Brain microvascular endothelial cell (primary cell): ENCODE measurements at regions of chr13 and their contacts with region 1.

Region 1: GRCh38 chr13:28679628-28680027 is 20.7 kb downstream of the POMP start:
- DNase-seq: no peak
- H3K4me3 ChIP-seq: no peak overlapping the region
- H3K27ac ChIP-seq: no peak overlapping the region
- H3K27me3 ChIP-seq: no peaks in the 10 kb centered on the region
- CTCF ChIP-seq: peak; percentile 22

Region 2: DNA sequence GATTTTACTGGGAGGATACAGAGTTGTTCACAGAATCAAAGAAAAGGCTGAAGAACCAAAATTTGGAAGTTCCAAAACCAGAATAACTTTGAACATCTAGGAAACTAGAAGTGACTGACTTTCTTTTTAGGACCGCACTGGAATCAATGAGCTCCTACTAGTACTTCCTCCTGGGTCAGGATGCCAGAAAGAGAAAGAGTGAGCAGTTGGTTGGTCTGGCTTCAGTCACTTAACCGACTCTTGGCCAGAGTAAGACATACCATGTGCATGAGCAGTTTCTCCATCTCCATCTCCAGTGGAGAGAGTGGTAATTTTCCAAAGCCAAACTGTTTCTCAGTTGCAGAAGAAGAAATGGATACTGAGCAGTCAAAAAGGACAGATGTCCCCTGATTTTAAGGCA is 113.4 kb after region 1 on chr13:
- in situ Hi-C with region 1: loop called (anchors 25 kb)
- DNase-seq: peak; percentile 75
- H3K4me3 ChIP-seq: no peak overlapping the region
- H3K27ac ChIP-seq: no peak overlapping the region
- H3K27me3 ChIP-seq: peaks cover 2% of the 10 kb centered on the region
- CTCF ChIP-seq: no peak